Colonic mucosa (tissue), 4 donors: ENCODE measurements at regions of chr1 and their contacts with region 1.

Region 1: GRCh38 chr1:86779308-86780191 is 75.2 kb downstream of the SH3GLB1 start:
- DNase-seq: peak; percentile 31
- H3K4me3 ChIP-seq: no peak overlapping the region
- H3K27ac ChIP-seq: no peak overlapping the region
- H3K4me1 ChIP-seq: peaks cover 5% of the 10 kb centered on the region
- H3K27me3 ChIP-seq: no peaks in the 10 kb centered on the region
- CTCF ChIP-seq: no peak

Region 2: GRCh38 chr1:86582161-86582560 is 197.4 kb before region 1 on chr1:
- intact Hi-C with region 1: no loop called
- DNase-seq: peak; percentile 36
- H3K4me3 ChIP-seq: no peak overlapping the region
- H3K27ac ChIP-seq: no peak overlapping the region
- H3K4me1 ChIP-seq: no peaks in the 10 kb centered on the region
- H3K27me3 ChIP-seq: no peaks in the 10 kb centered on the region
- CTCF ChIP-seq: no peak

Region 3: DNA sequence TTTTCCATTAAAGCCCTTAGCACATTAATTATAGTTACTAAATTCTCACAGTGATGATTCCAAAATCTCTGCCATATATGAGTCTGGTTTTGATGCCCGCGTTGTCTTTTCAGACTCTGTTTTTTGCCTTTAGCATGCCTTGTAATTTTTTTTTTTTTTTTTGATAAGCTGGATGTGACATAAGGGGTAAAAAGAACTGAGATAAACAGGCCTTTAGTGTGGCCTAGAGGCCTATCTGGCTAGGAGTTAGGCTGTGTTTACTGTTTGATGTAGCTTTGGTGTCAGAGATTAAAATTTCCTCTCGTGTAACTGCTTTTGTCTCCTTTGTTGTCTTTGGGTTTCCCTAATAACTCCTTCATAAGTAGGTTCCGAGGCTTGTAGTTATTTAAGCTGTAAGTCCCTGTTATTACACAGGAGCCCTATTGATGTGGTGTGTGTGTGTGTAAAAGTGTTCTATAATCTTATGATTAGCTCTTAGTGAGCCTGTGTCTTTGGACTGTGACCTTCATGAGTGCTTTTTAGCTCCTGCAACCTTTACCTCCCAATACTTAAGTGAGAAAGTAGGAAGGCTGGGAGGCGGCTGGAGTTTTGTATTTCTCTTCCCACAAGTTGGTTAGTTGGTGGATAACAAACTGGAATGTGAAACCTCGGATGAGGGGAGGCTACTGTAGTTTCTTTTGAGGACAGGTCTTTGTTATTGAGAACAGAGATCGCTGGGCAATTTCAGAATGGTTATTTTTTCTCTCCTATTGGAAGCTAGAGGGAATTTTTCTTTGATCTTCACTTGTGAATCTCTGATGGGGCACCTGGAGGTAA is 154.2 kb after region 1 on chr1:
- intact Hi-C with region 1: no loop called
- DNase-seq: no peak
- H3K4me3 ChIP-seq: no peak overlapping the region
- H3K27ac ChIP-seq: no peak overlapping the region
- H3K4me1 ChIP-seq: peaks cover 3% of the 10 kb centered on the region
- H3K27me3 ChIP-seq: no peaks in the 10 kb centered on the region
- CTCF ChIP-seq: no peak

Region 4: GRCh38 chr1:86948212-86948611 is 168.7 kb after region 1 on chr1:
- intact Hi-C with region 1: no loop called
- DNase-seq: no peak
- H3K4me3 ChIP-seq: no peak overlapping the region
- H3K27ac ChIP-seq: no peak overlapping the region
- H3K4me1 ChIP-seq: no peaks in the 10 kb centered on the region
- H3K27me3 ChIP-seq: no peaks in the 10 kb centered on the region
- CTCF ChIP-seq: no peak

Region 5: GRCh38 chr1:86965012-86965826 is 185.7 kb after region 1 on chr1:
- intact Hi-C with region 1: loop called (anchors 5 kb)
- DNase-seq: peak; percentile 19
- H3K4me3 ChIP-seq: no peak overlapping the region
- H3K27ac ChIP-seq: no peak overlapping the region
- H3K4me1 ChIP-seq: no peaks in the 10 kb centered on the region
- H3K27me3 ChIP-seq: no peaks in the 10 kb centered on the region
- CTCF ChIP-seq: peak; percentile 54